ENCODE measurements at regions of chr18 and their contacts with region 1.

Region 1: GRCh38 chr18:8608795-8609658 is at the start of gene RAB12:
- DNase-seq: peak; percentile 90
- H3K4me3 Mint-ChIP-seq: peak within 1 kb of the TSS; percentile 88
- H3K27ac Mint-ChIP-seq: peak within 1 kb of the TSS; percentile 90
- H3K4me1 Mint-ChIP-seq: peaks cover 48% of the 10 kb centered on the region
- H3K27me3 Mint-ChIP-seq: peaks cover 2% of the 10 kb centered on the region
- total RNA-seq, gene RAB12: 9.4 to 10.1 TPM

Region 2: GRCh38 chr18:8704361-8705279 is 95.6 kb after region 1 on chr18:
- CTCF ChIA-PET with region 1: interaction called, 3 read pairs
- POLR2A ChIA-PET with region 1: no interaction called
- intact Hi-C with region 1: loop called (anchors 5 kb)
- DNase-seq: peak; percentile 85
- H3K4me3 Mint-ChIP-seq: peak overlapping the region; percentile 84
- H3K27ac Mint-ChIP-seq: no peak overlapping the region
- H3K4me1 Mint-ChIP-seq: peaks cover 14% of the 10 kb centered on the region
- H3K27me3 Mint-ChIP-seq: peaks cover 46% of the 10 kb centered on the region